ENCODE measurements at regions of chr2 and their contacts with region 1.

Region 1: DNA sequence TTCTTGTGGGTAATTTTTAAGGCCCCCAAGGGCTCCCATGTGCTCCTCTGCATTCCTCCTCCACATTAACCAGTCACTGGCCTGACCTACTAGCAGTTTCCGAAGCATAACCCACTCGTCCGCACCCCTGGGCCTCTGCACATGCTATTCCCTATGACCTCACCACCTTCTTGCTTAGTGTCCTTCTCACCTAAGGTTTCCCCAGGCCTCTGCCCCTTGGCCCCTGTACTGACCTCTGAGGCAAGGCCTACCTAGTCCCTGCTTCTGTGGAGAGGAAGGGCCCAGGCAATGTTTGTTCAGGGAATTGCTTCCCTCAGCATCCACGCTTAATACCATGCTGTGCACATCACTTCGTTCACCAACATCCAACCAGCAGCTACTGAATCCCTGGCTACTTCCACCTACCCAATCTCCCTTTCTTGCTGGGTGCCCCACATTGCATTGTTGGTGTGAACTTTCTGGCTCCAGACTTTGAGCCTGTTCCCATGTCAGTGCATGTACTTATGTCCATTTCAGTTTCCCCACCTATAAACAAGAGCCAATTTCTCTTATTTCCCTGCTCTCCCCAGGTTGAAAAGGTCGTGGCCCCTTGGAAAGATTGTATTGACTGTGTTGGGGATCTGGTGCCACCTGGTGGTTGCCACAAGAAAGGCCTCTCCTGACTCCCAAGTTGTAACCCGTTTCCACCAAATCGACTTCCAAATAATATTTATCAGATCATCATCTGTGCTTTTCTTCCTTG is 19.2 kb upstream of the TMEM177 start:
- H3K4me3 ChIP-seq: no peak overlapping the region
- H3K27ac ChIP-seq: no peak overlapping the region
- H3K4me1 ChIP-seq: no peaks in the 10 kb centered on the region
- CTCF ChIP-seq: peak; percentile 29

Region 2: DNA sequence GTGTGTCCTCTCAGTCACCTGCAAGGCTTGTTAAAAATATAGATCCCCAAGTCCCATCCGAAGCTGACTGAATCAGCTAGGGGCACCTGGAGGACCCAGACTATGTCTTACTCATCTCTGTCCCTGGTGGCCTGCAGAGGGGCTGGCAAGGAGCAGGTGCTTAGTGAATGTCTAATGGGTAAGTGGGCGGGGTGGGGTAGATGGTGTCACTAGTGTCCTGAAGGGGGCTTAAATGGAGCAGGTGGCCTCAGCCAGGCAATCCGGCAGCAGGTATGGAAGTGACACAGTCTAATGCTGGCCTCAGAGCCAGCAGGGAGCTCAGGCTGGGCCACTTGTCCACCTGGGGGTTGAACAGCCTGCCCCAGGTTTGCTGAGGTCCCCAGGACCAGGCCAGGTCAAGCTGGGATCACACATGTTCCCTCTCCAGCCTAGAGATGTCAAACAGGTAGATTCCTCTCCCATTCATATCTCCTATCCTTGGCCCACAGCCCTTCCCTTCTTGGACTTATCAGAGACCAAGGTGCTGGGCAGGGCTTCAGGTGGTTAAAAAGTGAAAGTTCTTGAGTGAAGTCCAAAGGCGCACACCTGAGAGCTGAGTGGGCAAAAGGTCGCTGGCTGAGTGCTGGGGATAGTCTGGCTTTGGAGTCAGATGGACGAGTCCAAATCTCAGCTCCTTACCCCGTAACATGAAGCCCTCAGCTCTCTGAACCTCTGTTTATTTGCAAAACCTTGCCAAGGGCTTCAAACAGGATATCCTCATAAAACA is 434.5 kb before region 1 on chr2:
- CTCF ChIA-PET with region 1: no interaction called
- POLR2A ChIA-PET with region 1: no interaction called
- H3K4me3 ChIP-seq: no peak overlapping the region
- H3K27ac ChIP-seq: no peak overlapping the region
- H3K4me1 ChIP-seq: peaks cover 6% of the 10 kb centered on the region; the same call in 1 of the 2 replicates
- CTCF ChIP-seq: peak; percentile 47

Region 3: GRCh38 chr2:119649354-119649917 is 10.3 kb before region 1 on chr2:
- CTCF ChIA-PET with region 1: interaction called, 13 read pairs
- POLR2A ChIA-PET with region 1: no interaction called
- H3K4me3 ChIP-seq: no peak overlapping the region
- H3K27ac ChIP-seq: no peak overlapping the region
- H3K4me1 ChIP-seq: no peaks in the 10 kb centered on the region
- CTCF ChIP-seq: no peak

Region 4: GRCh38 chr2:119730671-119731193 is 71.0 kb after region 1 on chr2:
- CTCF ChIA-PET with region 1: no interaction called
- POLR2A ChIA-PET with region 1: no interaction called
- H3K4me3 ChIP-seq: no peak overlapping the region
- H3K27ac ChIP-seq: no peak overlapping the region
- H3K4me1 ChIP-seq: no peaks in the 10 kb centered on the region
- CTCF ChIP-seq: no peak

Region 5: DNA sequence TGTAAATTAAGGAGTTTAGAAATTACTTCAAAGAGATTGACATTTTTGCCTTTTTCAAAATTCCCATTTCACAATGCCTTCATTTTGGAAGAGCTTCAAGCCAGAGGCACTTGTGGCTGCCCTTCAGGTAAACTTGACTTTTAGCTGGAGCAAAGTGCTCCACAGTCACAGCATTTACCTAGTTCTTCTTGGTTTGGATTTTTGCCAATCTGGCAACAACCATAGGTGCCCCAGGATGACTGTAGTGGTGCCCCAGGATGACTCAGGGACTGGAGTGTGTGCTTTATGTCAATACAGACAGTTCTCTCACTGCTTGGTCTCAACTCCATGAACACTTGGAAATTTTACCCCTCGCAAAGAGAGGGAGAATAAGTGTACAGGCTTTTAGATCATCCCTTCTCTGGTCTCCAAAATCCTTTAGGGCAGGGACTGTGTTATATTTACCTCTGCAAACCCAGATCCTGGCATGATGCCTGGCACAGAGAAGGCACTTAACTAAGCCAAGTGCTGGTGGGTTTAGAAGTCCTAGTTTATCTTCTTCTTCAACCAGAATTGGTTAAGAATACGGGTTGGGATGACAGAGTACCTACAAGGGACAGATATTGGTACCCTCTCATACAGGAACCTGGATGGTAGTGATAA is 84.6 kb after region 1 on chr2:
- CTCF ChIA-PET with region 1: no interaction called
- POLR2A ChIA-PET with region 1: no interaction called
- H3K4me3 ChIP-seq: no peak overlapping the region
- H3K27ac ChIP-seq: no peak overlapping the region
- H3K4me1 ChIP-seq: no peaks in the 10 kb centered on the region
- CTCF ChIP-seq: no peak